Left colon (tissue), 2 donors: ENCODE measurements at regions of chr10 and their contacts with region 1.

Region 1: GRCh38 chr10:102729029-102730026 is 14.4 kb upstream of the WBP1L start:
- DNase-seq: peak; percentile 71 to 90
- ATAC-seq: peak; percentile 98

Region 2: DNA sequence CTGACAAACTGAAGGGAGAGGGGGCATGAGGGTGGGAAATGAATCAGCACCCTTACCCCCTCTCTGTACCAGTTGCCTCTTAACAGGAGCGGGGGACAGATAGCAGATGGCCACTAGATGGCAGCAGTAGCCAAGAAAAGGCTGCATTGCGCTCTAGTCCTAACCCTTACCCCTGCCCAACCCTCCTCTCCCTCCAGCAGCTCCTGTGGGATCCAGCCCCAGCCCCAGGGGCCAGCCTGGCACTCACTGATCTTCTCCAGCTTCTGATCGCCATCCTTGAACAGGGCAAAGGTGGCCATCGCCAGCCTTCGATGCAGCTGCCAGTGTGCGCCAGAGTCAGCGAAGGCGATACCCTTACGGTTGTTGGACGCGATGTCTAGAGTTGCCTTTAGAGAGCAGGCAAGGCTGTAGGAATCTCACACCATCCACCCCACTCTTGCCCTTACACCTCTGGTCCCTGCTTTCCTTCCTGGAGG is 105.7 kb after region 1 on chr10:
- intact Hi-C with region 1: loop called in 1 of 2 experiments (anchors 10 kb)
- DNase-seq: peak; percentile 56 to 84
- ATAC-seq: peak; percentile 89

Region 3: DNA sequence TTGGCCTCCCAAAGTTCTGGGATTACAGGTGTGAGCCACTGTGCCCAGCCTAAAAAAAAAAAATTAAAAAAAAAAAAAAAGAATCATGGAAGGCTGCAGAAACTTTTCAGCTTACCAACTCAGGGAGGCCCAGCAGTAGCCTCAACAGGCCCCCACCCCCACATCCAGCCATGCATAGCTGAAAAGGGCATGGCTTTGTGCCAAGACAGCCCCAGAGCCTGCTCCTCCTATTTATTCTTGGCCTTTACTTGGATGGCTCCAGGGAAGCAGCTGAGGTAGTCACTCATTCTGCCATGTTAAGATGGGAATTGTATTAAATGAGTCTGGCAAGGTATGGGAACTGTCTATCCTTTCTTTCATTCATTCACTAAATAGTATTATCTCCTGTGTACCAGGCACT is 175.0 kb after region 1 on chr10:
- intact Hi-C with region 1: loop called (anchors 5 to 10 kb)
- DNase-seq: no peak
- ATAC-seq: no peak

Region 4: DNA sequence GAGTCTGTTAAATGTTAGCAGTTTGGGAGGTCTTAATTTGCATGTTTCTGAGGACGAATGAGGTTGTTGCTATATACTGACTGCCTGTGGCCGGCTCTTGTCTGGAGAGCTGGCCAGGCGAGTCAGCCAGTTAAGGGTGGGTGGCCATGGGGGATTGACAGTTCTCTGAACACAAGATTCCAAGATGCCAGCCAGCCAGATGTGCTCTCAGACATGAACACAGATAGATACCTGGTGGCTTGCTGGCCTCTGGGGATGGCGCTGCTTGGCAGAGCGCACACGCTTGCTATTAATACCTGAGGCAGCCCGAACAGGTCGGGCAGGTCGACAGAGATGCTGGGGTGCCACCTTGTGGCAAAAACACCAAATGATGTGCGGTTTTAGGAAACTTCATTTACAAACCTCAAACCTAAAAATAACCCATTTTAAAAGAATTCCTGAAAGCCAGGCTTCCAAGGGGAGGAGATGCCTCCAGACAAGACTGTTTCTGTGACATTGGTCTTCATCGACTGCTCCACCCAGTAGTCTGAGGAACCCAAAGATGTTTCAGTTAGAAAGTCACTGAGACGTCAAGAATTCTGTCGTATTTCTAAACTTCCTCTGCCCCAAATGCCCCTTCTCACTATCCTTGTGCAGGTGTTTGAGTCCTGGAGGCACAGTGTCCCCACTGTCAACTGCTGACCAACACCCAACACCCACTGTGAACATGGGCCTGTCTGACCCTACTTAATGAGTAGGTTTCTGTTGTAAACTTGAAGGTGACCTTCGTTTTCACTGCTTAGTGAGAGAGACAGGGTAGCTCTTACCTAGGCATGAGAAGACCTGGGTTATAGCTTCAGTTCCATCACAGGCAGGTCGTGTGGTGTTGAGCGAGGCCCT is 340.4 kb after region 1 on chr10:
- intact Hi-C with region 1: loop called in 1 of 2 experiments (anchors 10 kb)
- DNase-seq: peak; percentile 44 to 83
- ATAC-seq: peak; percentile 85